ENCODE measurements at regions of chr7 and their contacts with region 1.

Region 1: GRCh38 chr7:44490351-44491200 is at the start of gene NUDCD3:
- DNase-seq: peak; percentile 90
- ATAC-seq: peak; percentile 83
- H3K4me3 Mint-ChIP-seq: peak within 1 kb of the TSS; percentile 86
- H3K27ac Mint-ChIP-seq: peak within 1 kb of the TSS; percentile 95
- H3K4me1 Mint-ChIP-seq: peaks cover 38% of the 10 kb centered on the region
- H3K27me3 Mint-ChIP-seq: peaks cover 3% of the 10 kb centered on the region
- total RNA-seq, gene NUDCD3: 92.2 to 101 TPM

Region 2: DNA sequence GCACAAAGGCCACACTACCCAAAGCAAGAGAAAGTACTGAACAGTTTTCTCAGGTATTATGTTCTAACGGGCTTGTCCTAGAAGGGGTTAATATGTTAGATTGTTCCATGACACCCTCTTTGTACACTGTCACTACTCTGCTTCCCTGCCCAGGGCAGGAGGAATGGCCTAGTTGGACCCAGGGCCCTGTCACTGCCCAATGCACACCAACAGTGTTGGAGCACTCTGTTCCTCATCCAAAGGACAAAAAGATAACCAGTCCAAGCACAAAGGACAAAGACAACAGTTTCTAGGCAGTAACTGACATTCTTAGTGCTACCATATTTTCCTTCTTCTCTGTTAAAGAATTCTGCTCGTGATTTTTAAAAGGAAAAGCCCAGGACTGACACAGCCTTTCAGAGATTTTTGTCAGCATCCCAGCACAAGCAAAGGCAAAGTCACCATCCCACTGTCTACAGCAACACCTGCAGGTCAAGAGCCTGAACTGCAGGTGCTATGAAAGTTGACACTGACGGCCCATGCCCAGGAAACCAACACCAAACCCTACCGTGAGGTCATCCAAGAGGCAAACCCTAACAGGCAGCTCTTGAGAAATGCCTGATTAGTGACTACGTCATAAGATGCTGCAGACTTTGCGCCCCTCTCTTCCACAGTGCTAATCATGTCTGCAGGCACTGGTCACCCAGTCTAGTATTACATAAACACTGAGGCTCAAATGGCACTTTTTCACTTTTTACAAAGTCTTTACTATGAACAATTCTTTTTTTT is 13.3 kb before region 1 on chr7:
- CTCF ChIA-PET with region 1: interaction called, 13 read pairs
- DNase-seq: peak; percentile 78
- ATAC-seq: peak; percentile 97
- H3K4me3 Mint-ChIP-seq: no peak overlapping the region
- H3K27ac Mint-ChIP-seq: no peak overlapping the region
- H3K4me1 Mint-ChIP-seq: peaks cover 23% of the 10 kb centered on the region
- H3K27me3 Mint-ChIP-seq: no peaks in the 10 kb centered on the region

Region 3: DNA sequence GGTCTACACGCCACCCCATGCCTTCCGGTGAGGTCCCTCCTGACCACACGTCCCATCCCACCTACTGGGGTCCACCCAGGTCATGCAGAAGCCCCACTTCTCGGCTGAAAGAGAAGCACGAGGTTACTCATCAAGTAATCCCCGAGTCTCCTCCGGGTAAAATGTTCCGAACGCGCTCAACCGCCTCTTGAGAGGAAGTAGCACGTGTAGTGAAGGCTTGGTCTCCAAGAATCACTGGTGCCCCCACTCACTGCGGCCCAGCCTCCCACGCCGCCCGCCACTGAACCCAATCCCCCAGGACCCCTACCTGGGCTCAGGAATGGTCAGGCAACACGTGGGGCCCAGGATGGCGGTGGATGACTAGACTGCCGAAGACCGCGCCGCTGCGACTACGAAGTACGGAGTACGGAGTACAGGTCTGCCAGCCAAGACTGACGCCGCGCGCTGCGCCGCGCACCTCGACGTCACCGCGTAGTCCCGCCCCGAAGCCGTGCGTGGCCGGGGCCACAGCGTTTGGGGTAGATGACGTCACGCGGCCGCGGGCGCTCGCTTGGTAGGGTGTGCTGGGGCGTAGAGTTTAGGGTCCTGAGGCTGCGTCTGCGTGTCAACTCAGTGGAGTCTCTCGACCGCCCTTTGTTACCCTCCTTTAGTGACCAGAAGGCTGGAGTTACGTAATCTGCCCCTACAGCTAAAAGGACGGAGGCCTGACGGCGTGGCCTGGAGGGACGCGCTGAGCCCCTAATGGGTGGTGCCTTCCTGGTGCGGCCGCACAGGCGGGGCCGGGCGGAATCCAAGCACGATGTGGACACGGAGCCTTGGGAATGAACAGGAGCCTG is 495.9 kb after region 1 on chr7:
- CTCF ChIA-PET with region 1: no interaction called
- DNase-seq: peak; percentile 97
- ATAC-seq: peak; percentile 95
- H3K4me3 Mint-ChIP-seq: peak overlapping the region; percentile 98
- H3K27ac Mint-ChIP-seq: peak overlapping the region; percentile 95
- H3K4me1 Mint-ChIP-seq: peaks cover 56% of the 10 kb centered on the region
- H3K27me3 Mint-ChIP-seq: no peaks in the 10 kb centered on the region